ENCODE measurements at regions of chr14 and their contacts with region 1.

Region 1: DNA sequence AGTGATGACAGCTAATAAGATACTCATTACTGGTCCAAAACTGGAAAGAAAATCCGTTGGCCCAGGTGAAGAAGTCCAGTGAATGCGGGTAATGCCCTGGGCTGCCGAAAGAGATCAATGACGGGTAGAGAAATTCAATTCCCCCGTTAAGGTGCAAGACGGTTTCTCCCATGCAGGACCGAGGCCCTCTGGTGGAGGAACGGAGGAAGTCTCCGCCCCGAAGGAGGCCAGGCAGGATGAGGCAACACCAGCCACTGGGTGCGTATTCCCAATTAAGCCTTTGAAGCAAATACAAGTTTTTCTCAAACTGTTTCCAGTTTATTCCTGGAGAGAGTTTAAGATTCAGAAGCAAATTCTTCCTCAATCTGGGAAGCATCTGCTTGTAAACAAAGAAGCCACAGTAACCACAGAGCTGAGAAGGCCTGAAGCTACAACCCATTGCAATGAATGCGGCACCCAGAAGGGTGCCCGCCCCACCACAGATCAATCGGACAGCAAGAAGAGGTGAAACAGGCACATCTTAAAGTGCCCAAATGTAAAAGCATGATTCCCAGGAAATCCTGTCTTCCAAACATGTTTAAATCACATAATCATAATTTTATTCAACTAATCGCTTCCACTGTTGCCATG is 118.5 kb downstream of the TTC7B start:
- DNase-seq: peak; percentile 87
- ATAC-seq: peak; percentile 95
- H3K4me3 Mint-ChIP-seq: no peak overlapping the region
- H3K27ac Mint-ChIP-seq: no peak overlapping the region
- H3K4me1 Mint-ChIP-seq: no peaks in the 10 kb centered on the region
- H3K27me3 Mint-ChIP-seq: no peaks in the 10 kb centered on the region

Region 2: DNA sequence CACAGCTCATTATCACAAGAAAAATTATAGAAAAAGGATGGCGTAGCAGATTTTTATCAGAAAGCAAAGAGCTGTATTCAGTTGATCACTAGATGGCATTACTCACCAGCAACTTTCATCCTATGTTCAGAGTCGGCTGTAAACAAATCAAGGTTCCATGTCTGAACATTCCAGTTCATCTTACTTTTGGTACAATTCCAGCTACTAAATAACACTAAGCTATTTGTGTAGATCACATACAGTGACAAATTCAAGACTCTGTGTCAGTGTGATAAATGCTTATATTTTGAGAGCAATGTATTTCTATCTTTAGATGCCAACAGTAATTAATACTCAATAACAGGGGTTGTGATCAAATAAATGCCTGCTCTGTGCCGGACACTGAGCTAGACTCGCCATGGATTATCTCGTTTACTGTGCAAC is 396.0 kb before region 1 on chr14:
- CTCF ChIA-PET with region 1: interaction called, 16 read pairs
- POLR2A ChIA-PET with region 1: no interaction called
- intact Hi-C with region 1: loop called (anchors 1 to 5 kb)
- DNase-seq: no peak
- ATAC-seq: no peak
- H3K4me3 Mint-ChIP-seq: no peak overlapping the region
- H3K27ac Mint-ChIP-seq: no peak overlapping the region
- H3K4me1 Mint-ChIP-seq: peaks cover 9% of the 10 kb centered on the region
- H3K27me3 Mint-ChIP-seq: no peaks in the 10 kb centered on the region

Region 3: DNA sequence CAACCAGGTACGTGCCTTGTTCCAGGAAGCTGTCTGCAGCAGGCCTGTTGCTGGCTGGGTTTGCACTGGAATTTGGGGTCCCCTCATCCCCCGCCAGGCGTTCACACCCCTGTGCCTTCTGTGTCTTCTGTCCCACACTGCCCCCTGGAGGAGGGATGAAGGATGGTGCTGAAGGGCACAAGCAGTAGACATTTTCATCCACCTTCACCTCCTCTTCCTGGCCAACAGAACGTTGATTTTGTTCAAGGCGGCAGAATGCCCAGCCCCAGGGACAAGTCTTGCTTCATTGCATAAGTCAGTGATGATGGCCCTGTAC is 178.8 kb before region 1 on chr14:
- CTCF ChIA-PET with region 1: interaction called, 3 read pairs
- POLR2A ChIA-PET with region 1: no interaction called
- intact Hi-C with region 1: loop called in 1 of 2 experiments (anchors 2 kb)
- DNase-seq: peak; percentile 68
- ATAC-seq: peak; percentile 76
- H3K4me3 Mint-ChIP-seq: no peak overlapping the region
- H3K27ac Mint-ChIP-seq: no peak overlapping the region
- H3K4me1 Mint-ChIP-seq: no peaks in the 10 kb centered on the region
- H3K27me3 Mint-ChIP-seq: no peaks in the 10 kb centered on the region

Region 4: GRCh38 chr14:90677484-90678050 is 20.1 kb before region 1 on chr14:
- CTCF ChIA-PET with region 1: interaction called, 18 read pairs
- POLR2A ChIA-PET with region 1: no interaction called
- intact Hi-C with region 1: loop called in 1 of 2 experiments (anchors 2 kb)
- DNase-seq: peak; percentile 23
- ATAC-seq: peak; percentile 93
- H3K4me3 Mint-ChIP-seq: peak overlapping the region; percentile 33
- H3K27ac Mint-ChIP-seq: peak overlapping the region; percentile 89
- H3K4me1 Mint-ChIP-seq: peaks cover 38% of the 10 kb centered on the region
- H3K27me3 Mint-ChIP-seq: no peaks in the 10 kb centered on the region

Region 5: DNA sequence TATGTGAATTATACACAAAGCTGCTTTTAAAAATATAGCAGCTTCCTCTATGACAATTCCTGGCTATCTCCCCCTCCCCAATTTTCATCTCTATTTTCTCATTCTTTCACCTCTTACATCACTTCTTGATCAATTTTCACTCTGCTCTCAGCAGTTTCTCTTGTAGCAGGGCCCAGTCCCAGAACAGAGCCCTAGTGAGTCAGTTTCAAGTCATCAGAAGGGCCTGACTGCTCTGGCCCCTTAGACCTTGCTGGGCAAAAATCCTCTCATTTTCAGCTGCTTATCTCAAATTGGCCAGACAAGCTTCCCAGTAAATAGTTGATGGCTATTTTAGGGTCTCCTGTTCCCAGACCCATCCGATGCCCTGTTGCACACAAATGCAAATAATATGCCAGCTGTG is 17.1 kb after region 1 on chr14:
- CTCF ChIA-PET with region 1: interaction called, 14 read pairs
- POLR2A ChIA-PET with region 1: no interaction called
- intact Hi-C with region 1: no loop called
- DNase-seq: no peak
- ATAC-seq: no peak
- H3K4me3 Mint-ChIP-seq: no peak overlapping the region
- H3K27ac Mint-ChIP-seq: no peak overlapping the region
- H3K4me1 Mint-ChIP-seq: no peaks in the 10 kb centered on the region
- H3K27me3 Mint-ChIP-seq: no peaks in the 10 kb centered on the region

Region 6: DNA sequence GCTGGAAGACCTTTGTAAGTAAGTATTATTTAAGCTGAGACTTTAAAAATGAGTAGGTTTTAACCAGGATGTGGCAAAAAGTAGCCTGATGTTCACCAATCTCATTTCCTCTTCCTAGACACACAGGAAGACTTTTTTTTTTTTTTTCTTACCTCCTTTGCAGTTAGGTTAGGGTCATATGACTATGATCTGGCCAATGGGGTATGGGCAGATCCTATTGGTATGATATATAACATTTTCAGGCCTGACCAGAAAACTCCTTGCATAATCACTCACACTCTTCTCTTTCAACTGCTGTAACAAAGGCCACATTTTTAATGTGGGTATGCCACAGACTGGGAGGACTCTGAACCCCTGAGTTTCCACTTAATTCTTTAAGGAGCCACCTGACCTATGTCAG is 365.4 kb after region 1 on chr14:
- CTCF ChIA-PET with region 1: no interaction called
- POLR2A ChIA-PET with region 1: no interaction called
- intact Hi-C with region 1: no loop called
- DNase-seq: peak; percentile 40
- ATAC-seq: peak; percentile 17
- H3K4me3 Mint-ChIP-seq: peak overlapping the region; percentile 32
- H3K27ac Mint-ChIP-seq: peak overlapping the region; percentile 90
- H3K4me1 Mint-ChIP-seq: peaks cover 60% of the 10 kb centered on the region
- H3K27me3 Mint-ChIP-seq: no peaks in the 10 kb centered on the region

Measured in activated CD4-positive, alpha-beta T cell treated with anti-CD3 and anti-CD28 coated beads for 36 hours (primary cell).